OCI-LY7 (cell line): ENCODE measurements at regions of chr14 and their contacts with region 1.

Region 1: GRCh38 chr14:91184559-91184958 is 59.9 kb downstream of the GPR68 start:
- DNase-seq: no peak
- H3K4me3 ChIP-seq: no peak overlapping the region
- H3K27ac ChIP-seq: no peak overlapping the region
- H3K4me1 ChIP-seq: no peaks in the 10 kb centered on the region
- CTCF ChIP-seq: no peak

Region 2: GRCh38 chr14:90839024-90839888 is 345.3 kb before region 1 on chr14:
- CTCF ChIA-PET with region 1: no interaction called
- POLR2A ChIA-PET with region 1: no interaction called
- intact Hi-C with region 1: no loop called
- DNase-seq: no peak
- H3K4me3 ChIP-seq: no peak overlapping the region
- H3K27ac ChIP-seq: no peak overlapping the region
- H3K4me1 ChIP-seq: no peaks in the 10 kb centered on the region
- CTCF ChIP-seq: no peak

Region 3: GRCh38 chr14:91278383-91278715 is 93.8 kb after region 1 on chr14:
- CTCF ChIA-PET with region 1: no interaction called
- POLR2A ChIA-PET with region 1: interaction called, 10 read pairs
- intact Hi-C with region 1: no loop called
- DNase-seq: peak; percentile 59
- H3K4me3 ChIP-seq: no peak overlapping the region
- H3K27ac ChIP-seq: peak overlapping the region; percentile 97
- H3K4me1 ChIP-seq: peaks cover 54% of the 10 kb centered on the region
- CTCF ChIP-seq: no peak